Adrenal gland (tissue), 19 donors: ENCODE measurements at regions of chr22 and their contacts with region 1.

Region 1: GRCh38 chr22:16917144-16918003 is 90.6 kb downstream of the GAB4 start:
- DNase-seq: peak; percentile 57 to 86 (median 73)
- H3K4me3 ChIP-seq: no peak overlapping the region
- H3K27ac ChIP-seq: no peak overlapping the region
- H3K4me1 ChIP-seq: no peaks in the 10 kb centered on the region
- H3K27me3 ChIP-seq: peaks cover 11% of the 10 kb centered on the region
- CTCF ChIP-seq: peak; percentile 37 to 64 (median 59)
- POLR2A ChIP-seq: no peak

Region 2: DNA sequence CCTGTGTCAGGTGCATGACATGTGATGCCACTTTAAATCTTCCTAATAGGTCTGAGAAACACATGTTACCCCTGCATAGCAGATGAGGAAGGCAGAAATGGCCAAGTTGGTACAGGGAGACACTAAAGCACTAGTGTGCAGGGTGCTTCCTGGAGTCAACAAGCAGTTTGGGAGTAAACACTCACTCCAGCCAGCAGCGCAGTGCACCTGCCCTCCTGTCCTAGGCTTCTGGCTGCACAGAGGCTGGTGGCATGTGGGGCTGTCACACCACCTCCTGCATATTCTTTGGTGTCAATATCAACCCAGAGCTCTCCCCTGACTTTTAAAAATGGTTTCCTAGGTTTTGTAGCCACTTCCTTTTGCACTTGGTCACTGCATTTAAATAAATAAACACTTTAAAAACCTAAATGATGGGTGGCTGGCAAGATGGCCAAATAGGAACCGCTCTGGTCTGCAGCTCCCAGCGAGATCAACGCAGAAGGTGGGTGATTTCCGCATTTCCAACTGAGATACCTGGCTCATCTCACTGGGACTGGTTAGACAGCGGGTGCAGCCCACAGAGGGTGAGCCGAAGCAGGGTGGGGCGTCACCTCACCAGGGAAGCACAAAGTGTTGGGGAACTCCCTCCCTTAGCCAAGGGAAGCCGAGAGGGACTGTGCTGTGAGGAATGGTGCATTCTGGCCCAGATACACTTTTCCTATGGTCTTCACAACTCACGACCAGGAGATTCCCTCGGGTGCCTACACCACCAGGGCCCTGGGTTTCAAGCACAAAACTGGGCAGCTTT is 57.1 kb after region 1 on chr22:
- intact Hi-C with region 1: no loop called
- DNase-seq: no peak
- H3K4me3 ChIP-seq: no peak overlapping the region
- H3K27ac ChIP-seq: no peak overlapping the region
- H3K4me1 ChIP-seq: no peaks in the 10 kb centered on the region
- H3K27me3 ChIP-seq: peaks cover 5% of the 10 kb centered on the region
- CTCF ChIP-seq: no peak
- POLR2A ChIP-seq: no peak

Region 3: DNA sequence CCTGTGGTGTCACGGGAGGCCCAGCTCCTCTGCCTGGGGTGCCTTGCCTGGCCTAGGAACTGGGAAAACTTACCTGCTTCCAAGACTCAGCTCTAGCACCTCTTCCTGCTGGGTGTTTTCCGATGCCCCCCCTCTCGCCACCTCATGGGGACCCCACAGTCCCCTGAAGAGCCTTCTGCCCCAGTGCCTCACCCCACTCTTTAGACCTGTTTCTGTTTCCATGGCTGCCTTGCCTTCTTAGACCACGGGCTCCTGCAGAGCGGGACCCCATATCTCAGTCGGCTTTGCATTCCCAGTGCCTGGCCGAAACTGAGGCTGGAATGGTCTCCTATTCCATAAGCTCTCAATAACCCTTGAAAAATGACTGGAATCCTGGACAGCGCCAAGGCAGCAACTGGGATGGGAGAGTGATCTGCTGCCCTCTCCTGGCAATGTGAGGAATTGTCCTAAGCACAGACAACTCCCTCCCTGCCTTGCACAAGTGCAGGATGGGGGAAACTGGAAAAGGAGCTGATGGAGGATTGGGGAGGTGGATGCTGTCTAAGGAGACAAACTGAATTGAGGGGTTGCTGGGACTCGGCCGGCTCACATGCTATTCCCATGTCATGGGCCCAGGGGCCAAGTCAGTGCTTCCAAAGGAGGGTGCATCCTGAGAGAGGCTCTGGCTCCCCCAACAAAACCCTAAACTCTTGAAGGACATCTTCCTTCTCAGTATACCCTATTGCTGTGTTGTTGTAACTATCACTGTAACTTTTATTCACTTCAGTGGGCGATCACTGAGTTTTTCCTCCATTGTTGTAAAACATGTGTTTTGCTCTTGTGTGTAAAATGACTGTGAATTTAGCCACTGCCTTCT is 140.8 kb after region 1 on chr22:
- intact Hi-C with region 1: loop called in 1 of 2 experiments (anchors 5 kb)
- DNase-seq: peak; percentile 67 to 87 (median 80)
- H3K4me3 ChIP-seq: no peak overlapping the region
- H3K27ac ChIP-seq: no peak overlapping the region
- H3K4me1 ChIP-seq: no peaks in the 10 kb centered on the region
- H3K27me3 ChIP-seq: no peaks in the 10 kb centered on the region
- CTCF ChIP-seq: peak; percentile 91 to 97 (median 92)
- POLR2A ChIP-seq: no peak

Region 4: GRCh38 chr22:17514084-17514483 is 596.7 kb after region 1 on chr22:
- intact Hi-C with region 1: loop called in 1 of 2 experiments (anchors 10 kb)
- DNase-seq: no peak
- H3K4me3 ChIP-seq: no peak overlapping the region
- H3K27ac ChIP-seq: no peak overlapping the region
- H3K4me1 ChIP-seq: no peaks in the 10 kb centered on the region
- H3K27me3 ChIP-seq: no peaks in the 10 kb centered on the region
- CTCF ChIP-seq: no peak
- POLR2A ChIP-seq: no peak